ENCODE measurements at regions of chr1 and their contacts with region 1.

Region 1: GRCh38 chr1:177164380-177165068 is at the start of gene ASTN1:
- DNase-seq: no peak
- H3K4me3 ChIP-seq: peak within 1 kb of the TSS in 2 of 3 experiments; percentile 10 to 13
- H3K27ac ChIP-seq: no peak within 1 kb of the TSS
- H3K4me1 ChIP-seq: peaks cover 4% of the 10 kb centered on the region
- H3K27me3 ChIP-seq: peaks cover 26% of the 10 kb centered on the region
- CTCF ChIP-seq: no peak
- total RNA-seq, gene ASTN1: 0.14 to 0.33 TPM

Region 2: GRCh38 chr1:177228700-177229080 is 64.2 kb after region 1 on chr1:
- CTCF ChIA-PET with region 1: no interaction called
- dilution Hi-C with region 1: no loop called
- in situ Hi-C with region 1: no loop called
- intact Hi-C with region 1: no loop called
- DNase-seq: peak; percentile 78
- H3K4me3 ChIP-seq: no peak overlapping the region
- H3K27ac ChIP-seq: no peak overlapping the region
- H3K4me1 ChIP-seq: peaks cover 10% of the 10 kb centered on the region
- H3K27me3 ChIP-seq: no peaks in the 10 kb centered on the region
- CTCF ChIP-seq: peak in 1 of 2 donors; percentile 11

Region 3: GRCh38 chr1:177355595-177355994 is 191.1 kb after region 1 on chr1:
- CTCF ChIA-PET with region 1: interaction called, 20 read pairs
- dilution Hi-C with region 1: no loop called
- in situ Hi-C with region 1: no loop called
- intact Hi-C with region 1: no loop called
- DNase-seq: peak; percentile 41
- H3K4me3 ChIP-seq: no peak overlapping the region
- H3K27ac ChIP-seq: no peak overlapping the region
- H3K4me1 ChIP-seq: no peaks in the 10 kb centered on the region
- H3K27me3 ChIP-seq: no peaks in the 10 kb centered on the region
- CTCF ChIP-seq: peak; percentile 51 to 59